ENCODE measurements at regions of chr15 and their contacts with region 1.

Region 1: GRCh38 chr15:73746883-73747282 is 6.3 kb downstream of the INSYN1 start:
- DNase-seq: no peak
- ATAC-seq: peak in 1 of 8 donors; percentile 32
- H3K4me3 ChIP-seq: no peak overlapping the region
- H3K27ac ChIP-seq: no peak overlapping the region
- H3K4me1 ChIP-seq: peaks cover 10 to 39% (median 33%) of the 10 kb centered on the region in 9 donors
- H3K27me3 ChIP-seq: peaks cover 0 to 17% (median under 1%) of the 10 kb centered on the region in 7 donors
- CTCF ChIP-seq: no peak

Region 2: DNA sequence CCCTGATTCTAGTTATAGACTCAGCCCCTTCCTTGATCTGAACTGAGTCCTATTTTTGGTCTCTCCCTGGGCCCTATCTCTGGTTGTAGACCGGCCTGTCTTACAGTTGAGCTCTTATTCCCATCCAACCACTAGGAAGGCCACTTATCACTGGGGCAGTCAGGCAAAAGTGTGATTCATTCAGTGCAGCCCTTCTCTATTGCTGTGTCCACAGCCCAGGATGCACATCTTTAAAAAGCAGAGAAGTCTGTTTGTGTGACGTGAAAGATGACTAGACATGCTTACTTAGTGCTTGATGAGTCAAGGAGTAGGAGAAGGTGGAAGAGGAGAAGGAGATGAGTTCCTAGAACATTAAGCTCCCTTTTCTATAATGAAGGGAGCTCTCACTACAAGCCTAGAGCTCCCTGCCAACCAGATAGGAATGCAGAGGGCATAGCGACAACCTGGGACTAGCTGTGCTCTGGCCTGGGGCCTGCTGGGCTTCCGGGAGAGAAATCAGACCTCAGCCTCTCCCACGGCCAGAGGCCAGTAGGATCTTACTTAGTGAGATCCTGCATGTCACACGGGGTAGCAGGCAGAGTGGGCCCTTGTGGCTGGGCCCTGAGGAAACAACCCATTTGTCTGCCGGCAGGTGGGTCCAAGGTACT is 19.4 kb before region 1 on chr15:
- intact Hi-C with region 1: loop called in 1 of 10 experiments (anchors 1 kb)
- DNase-seq: no peak
- ATAC-seq: peak in 7 of 8 donors; percentile 28 to 93 (median 82)
- H3K4me3 ChIP-seq: no peak overlapping the region
- H3K27ac ChIP-seq: peak overlapping the region; percentile 45 to 76 (median 59)
- H3K4me1 ChIP-seq: peaks cover 0 to 18% (median 0%) of the 10 kb centered on the region in 9 donors
- H3K27me3 ChIP-seq: no peaks in the 10 kb centered on the region
- CTCF ChIP-seq: no peak